Adrenal gland (tissue), 19 donors: ENCODE measurements at regions of chr2 and their contacts with region 1.

Region 1: GRCh38 chr2:101387151-101387807 is at the start of gene CREG2:
- DNase-seq: peak; percentile 57 to 80 (median 72)
- H3K4me3 ChIP-seq: peak within 1 kb of the TSS in 2 of 4 donors; percentile 8 to 48
- H3K27ac ChIP-seq: no peak within 1 kb of the TSS
- H3K4me1 ChIP-seq: peaks cover 9 to 16% of the 10 kb centered on the region in 2 donors
- H3K27me3 ChIP-seq: peaks cover 26% of the 10 kb centered on the region
- CTCF ChIP-seq: peak in 5 of 6 experiments; percentile 18 to 64 (median 28)
- POLR2A ChIP-seq: no peak
- total RNA-seq, gene CREG2: 0.25 to 0.55 (median 0.28) TPM in 3 of 9 donors, not detected in the others

Region 2: DNA sequence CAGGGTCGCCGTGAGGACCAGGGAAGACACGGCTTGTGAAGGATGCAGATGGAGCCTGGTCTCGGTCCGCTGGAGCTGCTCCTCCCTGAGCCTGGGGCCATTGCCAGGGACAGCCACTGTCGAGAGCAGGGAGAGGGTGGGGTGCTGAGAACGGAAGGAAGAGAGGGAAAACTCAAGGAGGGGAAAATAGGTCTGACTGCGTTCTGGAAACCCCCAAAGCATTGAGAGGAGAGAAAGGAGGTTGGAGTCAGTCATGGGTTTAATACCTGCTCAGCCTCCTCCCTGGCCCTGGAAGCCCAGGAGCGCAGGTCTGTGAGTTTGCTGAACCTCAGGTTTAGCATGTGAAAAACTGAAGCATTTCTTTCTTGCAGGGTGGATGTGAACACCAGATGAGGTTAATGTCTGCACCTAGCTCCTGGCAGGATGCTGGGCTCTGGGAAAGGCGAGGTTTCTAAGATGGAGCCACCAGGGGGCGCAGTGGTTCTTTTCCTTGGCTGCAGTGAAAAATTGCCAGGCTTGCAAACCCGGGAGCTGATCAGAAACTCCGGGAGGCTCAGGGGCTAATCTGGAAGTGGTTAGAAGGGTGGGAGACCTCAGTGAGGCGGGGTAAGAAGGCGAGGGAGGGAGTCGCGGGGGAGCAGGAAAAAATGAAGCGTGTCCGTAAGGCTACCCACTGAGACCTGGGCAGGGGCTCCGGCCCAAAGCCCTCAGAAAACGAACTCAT is 45.2 kb before region 1 on chr2:
- intact Hi-C with region 1: loop called in 1 of 2 experiments (anchors 5 kb)
- DNase-seq: peak; percentile 55 to 88 (median 74)
- H3K4me3 ChIP-seq: no peak overlapping the region
- H3K27ac ChIP-seq: no peak overlapping the region
- H3K4me1 ChIP-seq: no peaks in the 10 kb centered on the region
- H3K27me3 ChIP-seq: no peaks in the 10 kb centered on the region
- CTCF ChIP-seq: peak; percentile 61 to 82 (median 70)
- POLR2A ChIP-seq: no peak